Activated CD4-positive, alpha-beta T cell treated with anti-CD3 and anti-CD28 coated beads for 36 hours (primary cell): ENCODE measurements at regions of chr12 and their contacts with region 1.

Region 1: GRCh38 chr12:112125250-112125999 is at the start of gene TRAFD1:
- DNase-seq: peak; percentile 99
- ATAC-seq: peak; percentile 99
- H3K4me3 Mint-ChIP-seq: peak within 1 kb of the TSS; percentile 83
- H3K27ac Mint-ChIP-seq: peak within 1 kb of the TSS; percentile 82
- H3K4me1 Mint-ChIP-seq: peaks cover 38% of the 10 kb centered on the region
- H3K27me3 Mint-ChIP-seq: no peaks in the 10 kb centered on the region
- total RNA-seq, gene TRAFD1: 52.5 to 54.1 TPM

Region 2: DNA sequence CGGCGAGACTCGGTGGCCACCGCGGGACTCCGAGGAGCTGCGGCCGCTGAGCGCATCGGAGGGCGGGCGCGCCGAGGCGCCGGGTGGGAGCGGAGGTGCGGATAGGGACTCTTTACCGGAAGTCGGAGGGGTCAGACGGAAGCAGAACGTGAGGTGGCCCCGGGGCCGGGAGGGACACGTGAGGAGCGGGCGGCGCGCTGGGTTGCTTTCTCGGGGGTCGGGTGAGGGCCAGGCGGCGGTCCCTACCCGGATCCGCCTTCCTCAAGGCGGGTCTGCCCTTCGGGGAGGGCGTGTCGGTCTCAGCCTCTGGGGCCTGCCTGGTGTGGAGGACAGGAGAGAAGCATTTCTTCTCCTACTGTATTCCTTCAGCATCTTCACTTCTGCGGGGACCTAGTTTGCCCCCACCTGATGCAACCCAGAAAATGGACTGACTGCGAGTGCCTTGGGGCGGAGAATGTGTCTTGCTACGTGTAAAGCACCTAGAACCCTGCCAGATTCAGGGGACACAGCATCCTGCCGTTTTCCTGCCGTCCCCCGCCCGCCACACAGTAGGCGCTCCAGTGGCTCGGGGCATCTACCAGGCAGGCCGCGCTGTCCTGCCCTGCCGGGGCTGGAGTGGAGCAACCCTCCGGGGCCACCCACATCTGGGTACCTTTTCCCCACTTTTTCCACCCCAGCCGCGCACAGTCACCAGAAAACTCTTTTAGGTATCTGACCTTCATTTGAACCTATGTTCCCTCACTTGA is 525.8 kb before region 1 on chr12:
- CTCF ChIA-PET with region 1: no interaction called
- POLR2A ChIA-PET with region 1: no interaction called
- intact Hi-C with region 1: loop called in 1 of 2 experiments (anchors 5 kb)
- DNase-seq: peak; percentile 91
- ATAC-seq: peak; percentile 83
- H3K4me3 Mint-ChIP-seq: peak overlapping the region; percentile 81
- H3K27ac Mint-ChIP-seq: peak overlapping the region; percentile 92
- H3K4me1 Mint-ChIP-seq: peaks cover 17% of the 10 kb centered on the region
- H3K27me3 Mint-ChIP-seq: no peaks in the 10 kb centered on the region

Region 3: GRCh38 chr12:111685744-111686517 is 439.5 kb before region 1 on chr12 and contains the starts of genes ACAD10 and BRAP:
- CTCF ChIA-PET with region 1: no interaction called
- POLR2A ChIA-PET with region 1: no interaction called
- intact Hi-C with region 1: loop called in 1 of 2 experiments (anchors 5 kb)
- DNase-seq: peak; percentile 95
- ATAC-seq: peak; percentile 97
- H3K4me3 Mint-ChIP-seq: peak within 1 kb of the TSS; percentile 89
- H3K27ac Mint-ChIP-seq: peak within 1 kb of the TSS; percentile 91
- H3K4me1 Mint-ChIP-seq: peaks cover 31% of the 10 kb centered on the region
- H3K27me3 Mint-ChIP-seq: no peaks in the 10 kb centered on the region
- total RNA-seq, gene ACAD10: 25.5 to 27.5 TPM
- total RNA-seq, gene BRAP: 18.3 to 23.6 TPM

Region 4: DNA sequence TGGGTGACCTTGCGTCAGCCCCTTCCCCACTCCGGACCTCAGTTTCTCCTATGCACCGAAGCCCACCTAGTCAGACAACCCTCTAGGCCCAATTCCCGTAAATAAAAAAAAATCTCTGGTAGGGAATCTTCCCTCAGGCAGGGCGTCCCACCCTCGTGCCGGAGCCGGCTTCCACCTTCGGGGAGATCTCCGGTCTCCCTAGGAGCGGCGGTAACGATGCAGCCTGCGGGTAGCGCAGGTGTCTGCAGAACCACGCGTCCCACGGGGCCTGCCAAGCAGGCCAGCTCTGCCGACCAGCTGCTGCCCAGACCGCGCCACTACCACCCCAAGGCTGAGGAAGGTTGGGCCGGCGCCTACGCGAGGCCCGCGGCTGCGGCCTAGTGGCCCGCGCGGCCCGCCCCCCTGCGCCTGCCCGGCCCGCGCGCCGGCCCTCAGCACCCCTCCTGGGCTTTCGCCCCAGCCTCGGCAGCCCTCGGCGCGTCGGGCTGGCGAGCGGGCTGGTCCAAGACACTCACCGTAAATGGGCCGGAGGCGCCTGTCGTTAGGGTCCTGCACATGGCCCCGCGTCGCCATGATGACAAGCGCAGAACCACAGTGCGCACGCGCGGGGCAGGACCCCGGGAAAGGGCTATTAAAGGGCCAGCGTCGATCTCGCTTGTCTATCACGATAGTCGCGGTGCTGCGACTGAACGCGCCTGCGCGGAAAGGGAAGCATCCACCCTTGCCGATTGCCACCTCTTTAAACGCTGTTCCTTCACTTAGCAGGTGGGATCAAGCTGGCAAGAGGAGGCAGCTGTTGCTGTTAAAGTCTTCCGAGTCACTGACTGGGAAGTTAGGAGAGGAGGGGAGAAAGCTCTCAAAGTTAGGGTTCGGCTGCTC is 17.0 kb before region 1 on chr12 and contains the start of gene NAA25:
- CTCF ChIA-PET with region 1: interaction called, 10 read pairs
- POLR2A ChIA-PET with region 1: interaction called, 20 read pairs
- intact Hi-C with region 1: loop called (anchors 1 kb)
- DNase-seq: peak; percentile 94
- ATAC-seq: peak; percentile 80
- H3K4me3 Mint-ChIP-seq: peak within 1 kb of the TSS; percentile 97
- H3K27ac Mint-ChIP-seq: peak within 1 kb of the TSS; percentile 99
- H3K4me1 Mint-ChIP-seq: peaks cover 55% of the 10 kb centered on the region
- H3K27me3 Mint-ChIP-seq: no peaks in the 10 kb centered on the region
- total RNA-seq, gene NAA25: 50.9 to 58.5 TPM

Region 5: DNA sequence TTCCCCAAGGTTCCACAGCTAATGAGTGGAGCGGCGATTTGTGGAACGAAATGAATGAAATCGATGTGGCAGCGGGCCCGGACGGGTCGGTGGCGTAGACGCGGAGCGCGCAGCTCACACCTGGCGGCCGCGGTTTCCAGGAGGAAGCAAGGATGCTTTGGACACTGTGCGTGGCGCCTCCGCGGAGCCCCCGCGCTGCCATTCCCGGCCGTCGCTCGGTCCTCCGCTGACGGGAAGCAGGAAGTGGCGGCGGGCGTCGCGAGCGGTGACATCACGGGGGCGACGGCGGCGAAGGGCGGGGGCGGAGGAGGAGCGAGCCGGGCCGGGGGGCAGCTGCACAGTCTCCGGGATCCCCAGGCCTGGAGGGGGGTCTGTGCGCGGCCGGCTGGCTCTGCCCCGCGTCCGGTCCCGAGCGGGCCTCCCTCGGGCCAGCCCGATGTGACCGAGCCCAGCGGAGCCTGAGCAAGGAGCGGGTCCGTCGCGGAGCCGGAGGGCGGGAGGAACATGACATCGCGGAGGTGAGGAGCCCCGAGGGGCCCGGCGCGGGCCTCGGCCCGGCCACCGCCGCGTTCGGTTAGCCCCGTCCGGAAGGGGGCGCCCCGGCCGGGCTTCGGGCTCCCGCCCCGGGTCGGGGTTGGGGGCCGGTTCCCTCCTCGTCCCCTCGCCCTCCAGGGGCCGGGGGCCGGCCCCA is 293.3 kb after region 1 on chr12 and contains the start of gene PTPN11:
- CTCF ChIA-PET with region 1: no interaction called
- POLR2A ChIA-PET with region 1: no interaction called
- intact Hi-C with region 1: loop called in 1 of 2 experiments (anchors 1 kb)
- DNase-seq: peak; percentile 95
- ATAC-seq: peak; percentile 78
- H3K4me3 Mint-ChIP-seq: peak within 1 kb of the TSS; percentile 97
- H3K27ac Mint-ChIP-seq: peak within 1 kb of the TSS; percentile 97
- H3K4me1 Mint-ChIP-seq: peaks cover 40% of the 10 kb centered on the region
- H3K27me3 Mint-ChIP-seq: no peaks in the 10 kb centered on the region
- total RNA-seq, gene PTPN11: 129 to 134 TPM